Activated T-helper 2 cell treated with anti-CD3 and anti-CD28 coated beads, Interferon-gamma antibody, Interleukin-2, Interleukin-4, amounts not matched to agents 10 μg/mL and 5 μg/mL and 100 μg/mL, durations not matched to agents 14 hours and 24 hours and 36 hours (primary cell): ENCODE measurements at regions of chr3 and their contacts with region 1.

Region 1: DNA sequence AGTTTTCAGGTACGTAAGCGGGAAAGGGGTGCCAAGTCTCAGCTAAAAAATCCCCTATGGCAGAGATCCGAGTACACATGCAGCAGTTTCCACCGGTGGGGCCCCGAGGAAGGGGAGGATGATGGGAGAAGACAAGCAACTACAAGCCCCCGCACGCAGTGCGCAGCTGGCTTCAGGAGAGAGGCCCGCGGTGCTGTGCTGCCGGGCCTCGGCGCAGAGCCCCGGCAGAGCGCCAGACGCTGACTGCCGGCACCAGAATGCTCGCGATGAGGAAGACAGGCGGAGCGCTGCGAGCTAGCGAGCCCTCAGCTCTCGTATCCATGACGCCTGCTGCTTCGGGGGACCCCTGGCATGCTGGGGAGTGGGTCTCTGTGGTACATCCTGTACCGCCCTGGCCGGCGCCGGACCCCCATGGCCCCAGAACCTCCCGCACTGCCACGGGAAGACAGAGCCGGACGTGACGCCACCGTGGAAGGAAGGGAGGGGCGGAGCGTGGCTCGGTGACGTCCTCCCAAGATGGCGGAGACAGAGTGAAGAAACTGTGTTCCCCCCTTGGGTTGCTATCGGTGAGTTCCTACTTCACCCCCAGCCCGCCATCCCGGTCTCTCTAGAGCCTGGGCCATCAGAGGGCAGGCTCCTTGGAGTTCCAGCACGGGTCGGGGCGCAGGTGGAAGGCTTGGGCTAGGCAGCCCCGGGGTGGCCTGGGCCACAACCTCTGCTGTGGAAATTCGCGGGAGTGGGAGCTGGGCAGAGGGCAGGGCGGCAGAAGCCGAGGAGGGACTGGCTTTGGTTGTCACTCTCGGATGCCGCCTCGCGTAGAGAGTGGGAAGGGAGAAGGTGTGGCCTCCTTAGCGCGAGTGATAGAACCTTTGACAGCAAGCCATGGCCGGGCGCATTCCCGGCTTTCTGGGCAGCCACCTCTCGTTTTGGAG is at the start of gene MYNN:
- DNase-seq: peak; percentile 90
- H3K4me3 Mint-ChIP-seq: peak within 1 kb of the TSS; percentile 96
- H3K27ac Mint-ChIP-seq: peak within 1 kb of the TSS; percentile 99
- H3K4me1 Mint-ChIP-seq: peaks cover 31% of the 10 kb centered on the region
- H3K27me3 Mint-ChIP-seq: no peaks in the 10 kb centered on the region
- total RNA-seq, gene MYNN: 13.8 and 15.5 TPM in 2 replicates

Region 2: GRCh38 chr3:169748670-169749069 is 24.5 kb before region 1 on chr3:
- intact Hi-C with region 1: no loop called
- DNase-seq: no peak
- H3K4me3 Mint-ChIP-seq: no peak overlapping the region
- H3K27ac Mint-ChIP-seq: no peak overlapping the region
- H3K4me1 Mint-ChIP-seq: peaks cover 11% of the 10 kb centered on the region
- H3K27me3 Mint-ChIP-seq: peaks cover 35% of the 10 kb centered on the region

Region 3: GRCh38 chr3:169759256-169759655 is 13.9 kb before region 1 on chr3:
- intact Hi-C with region 1: loop called (anchors 1 kb)
- DNase-seq: no peak
- H3K4me3 Mint-ChIP-seq: no peak overlapping the region
- H3K27ac Mint-ChIP-seq: peak overlapping the region; percentile 40
- H3K4me1 Mint-ChIP-seq: peaks cover 37% of the 10 kb centered on the region
- H3K27me3 Mint-ChIP-seq: peaks cover 3% of the 10 kb centered on the region

Region 4: DNA sequence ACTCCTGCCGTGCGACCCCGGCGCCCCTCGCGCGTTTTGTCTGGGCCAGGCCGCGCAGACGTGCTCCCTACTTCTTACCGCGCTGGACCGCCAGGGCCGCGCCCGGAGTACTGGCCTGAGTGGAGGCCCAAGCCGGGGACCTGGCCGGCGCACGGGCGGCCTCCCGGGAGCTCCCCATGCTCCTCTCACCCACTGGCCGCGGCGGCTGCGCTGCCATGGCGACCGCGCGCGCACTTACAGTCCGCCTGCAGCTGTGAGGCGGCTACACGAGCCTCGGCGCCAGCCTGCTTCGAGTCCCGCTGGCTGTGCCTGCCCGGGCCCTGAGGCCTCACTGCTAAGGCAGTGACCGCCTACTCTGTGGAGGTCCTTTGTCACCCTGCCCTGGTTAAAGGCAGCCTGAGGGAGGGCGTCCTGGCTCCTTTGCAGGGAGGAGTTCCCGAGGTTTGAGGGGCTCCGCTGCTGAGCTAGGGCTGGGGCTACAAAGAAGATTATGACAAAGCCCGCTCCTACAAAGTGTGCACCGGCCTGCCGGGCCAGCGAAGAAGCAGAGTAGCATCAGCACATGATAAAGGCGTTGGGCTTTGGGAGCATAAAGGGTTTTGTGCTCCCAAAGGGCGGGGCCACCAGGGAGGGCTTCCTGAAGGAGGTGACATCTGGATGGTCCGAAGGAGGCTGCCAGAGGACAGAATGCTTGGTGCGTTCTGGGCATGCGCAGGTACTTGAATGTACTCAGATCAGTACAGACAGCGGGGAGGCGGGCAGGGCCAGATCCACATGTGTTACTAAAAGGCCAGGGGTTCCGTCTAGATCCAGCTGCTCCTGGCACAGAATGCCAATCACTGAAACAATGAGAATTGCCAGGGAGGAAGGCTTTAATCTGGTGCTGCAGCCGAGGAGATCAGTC is 39.4 kb after region 1 on chr3 and contains the starts of genes LRRC34 and LRRIQ4:
- intact Hi-C with region 1: loop called (anchors 1 kb)
- DNase-seq: peak; percentile 66
- H3K4me3 Mint-ChIP-seq: peak within 1 kb of the TSS; percentile 87
- H3K27ac Mint-ChIP-seq: peak within 1 kb of the TSS; percentile 95
- H3K4me1 Mint-ChIP-seq: peaks cover 37% of the 10 kb centered on the region
- H3K27me3 Mint-ChIP-seq: peaks cover 15% of the 10 kb centered on the region
- total RNA-seq, gene LRRC34: 5.6 and 5.9 TPM in 2 replicates
- total RNA-seq, gene LRRIQ4: 0.16 TPM in 2 replicates

Region 5: GRCh38 chr3:170107941-170108340 is 334.8 kb after region 1 on chr3:
- intact Hi-C with region 1: no loop called
- DNase-seq: no peak
- H3K4me3 Mint-ChIP-seq: no peak overlapping the region
- H3K27ac Mint-ChIP-seq: no peak overlapping the region
- H3K4me1 Mint-ChIP-seq: peaks cover 13% of the 10 kb centered on the region
- H3K27me3 Mint-ChIP-seq: no peaks in the 10 kb centered on the region

Region 6: DNA sequence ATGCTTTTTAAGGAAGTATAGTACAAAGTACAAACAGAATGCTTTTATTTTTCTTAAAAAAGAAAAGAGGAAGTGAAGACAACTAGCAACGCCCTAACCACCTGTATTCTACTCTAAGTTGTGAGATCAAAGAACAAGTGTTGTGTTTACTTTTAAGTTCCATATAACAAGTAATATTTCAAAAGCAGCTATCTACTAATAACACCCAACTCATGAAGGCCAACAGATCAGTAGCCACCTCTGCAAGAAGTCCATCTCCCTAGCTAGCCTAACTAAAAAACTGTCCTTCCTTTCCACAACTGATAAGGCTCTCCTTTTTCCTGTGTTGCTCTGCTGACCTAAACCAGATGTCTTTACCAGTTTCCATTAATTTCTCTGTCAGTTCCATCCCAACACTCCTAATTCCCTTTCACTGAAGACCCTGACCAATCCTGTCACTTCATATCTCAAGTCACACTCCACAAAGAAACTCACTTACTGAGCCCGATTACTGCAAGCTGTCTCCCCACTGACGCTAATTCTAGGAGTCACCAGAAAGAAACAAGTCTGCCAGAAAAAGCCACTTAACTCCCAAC is 381.5 kb after region 1 on chr3:
- intact Hi-C with region 1: no loop called
- DNase-seq: no peak
- H3K4me3 Mint-ChIP-seq: peak overlapping the region; percentile 27
- H3K27ac Mint-ChIP-seq: peak overlapping the region; percentile 53
- H3K4me1 Mint-ChIP-seq: peaks cover 24% of the 10 kb centered on the region
- H3K27me3 Mint-ChIP-seq: no peaks in the 10 kb centered on the region

Region 7: DNA sequence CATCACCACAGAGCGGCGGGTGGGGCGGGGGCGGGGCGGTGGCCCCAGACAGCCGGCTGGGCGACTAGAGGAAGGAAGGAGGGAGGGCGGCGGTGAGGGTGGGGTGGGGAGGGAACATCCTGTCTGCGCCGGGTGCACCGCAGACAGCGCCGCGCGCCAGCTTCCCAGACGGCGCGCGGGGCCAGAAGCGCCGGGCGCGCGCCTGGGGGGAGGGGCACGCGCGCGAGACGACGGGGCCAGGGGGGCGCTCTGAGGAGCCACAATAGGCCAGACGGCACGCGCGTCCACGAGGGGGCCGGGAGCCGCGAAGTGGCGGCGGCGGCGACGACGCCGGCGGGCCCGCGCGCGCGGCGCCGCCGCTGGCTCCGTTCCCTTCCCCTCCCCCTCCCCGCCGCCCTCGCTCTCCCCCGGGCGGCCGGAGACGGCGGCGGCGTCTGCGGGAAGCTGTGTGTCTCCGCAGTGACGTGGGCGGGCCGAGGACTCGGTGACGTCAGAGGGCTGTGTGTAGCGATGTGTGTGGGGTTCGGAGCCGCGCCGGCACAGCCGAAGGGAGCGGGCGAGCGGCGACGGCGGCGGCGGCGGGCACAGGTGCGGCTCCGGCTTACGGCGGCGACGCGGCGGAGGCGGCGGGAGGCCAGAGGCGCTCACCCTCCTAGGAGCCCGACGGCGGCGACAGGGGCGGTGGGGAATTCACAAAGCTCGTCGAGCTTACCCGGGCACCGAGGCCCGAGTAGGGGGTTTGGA is 584.2 kb after region 1 on chr3 and contains the start of gene SKIL:
- intact Hi-C with region 1: loop called (anchors 5 kb)
- DNase-seq: peak; percentile 93
- H3K4me3 Mint-ChIP-seq: peak within 1 kb of the TSS; percentile 95
- H3K27ac Mint-ChIP-seq: peak within 1 kb of the TSS; percentile 97
- H3K4me1 Mint-ChIP-seq: peaks cover 30% of the 10 kb centered on the region
- H3K27me3 Mint-ChIP-seq: peaks cover 8% of the 10 kb centered on the region
- total RNA-seq, gene SKIL: 31.2 and 33.2 TPM in 2 replicates

Region 8: GRCh38 chr3:170869645-170870593 is 1096.8 kb after region 1 on chr3 and contains the start of gene RPL22L1:
- intact Hi-C with region 1: loop called (anchors 5 kb)
- DNase-seq: peak; percentile 92
- H3K4me3 Mint-ChIP-seq: peak within 1 kb of the TSS; percentile 91
- H3K27ac Mint-ChIP-seq: peak within 1 kb of the TSS; percentile 97
- H3K4me1 Mint-ChIP-seq: peaks cover 12% of the 10 kb centered on the region
- H3K27me3 Mint-ChIP-seq: peaks cover 6% of the 10 kb centered on the region
- total RNA-seq, gene RPL22L1: 165 and 173 TPM in 2 replicates